B cell (primary cell): ENCODE measurements at regions of chr9 and their contacts with region 1.

Region 1: DNA sequence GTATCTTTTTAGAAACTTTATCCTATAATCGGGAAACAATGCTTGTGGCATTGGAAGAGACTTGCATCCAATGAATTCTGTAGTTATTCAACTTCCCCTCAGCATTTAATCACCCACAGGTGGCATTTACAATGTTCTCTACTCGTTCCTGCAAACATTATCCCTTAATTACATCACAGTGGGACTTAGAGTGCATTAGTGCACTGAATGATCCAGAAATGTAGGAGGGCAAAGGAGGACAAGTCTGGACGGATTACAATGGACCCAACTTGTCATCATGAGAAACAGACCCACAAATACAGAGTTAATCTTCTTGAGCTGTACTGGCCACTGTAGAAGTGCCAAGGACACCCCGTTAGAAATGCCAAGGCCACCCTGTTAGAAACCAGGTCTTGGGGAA is 129.1 kb downstream of the DOCK8 start:
- DNase-seq: no peak
- ATAC-seq: no peak
- H3K4me3 ChIP-seq: no peak overlapping the region
- H3K4me3 Mint-ChIP-seq: no peak overlapping the region
- H3K27ac ChIP-seq: no peak overlapping the region
- H3K27ac Mint-ChIP-seq: no peak overlapping the region
- H3K4me1 ChIP-seq: no peaks in the 10 kb centered on the region
- H3K4me1 Mint-ChIP-seq: no peaks in the 10 kb centered on the region
- H3K27me3 ChIP-seq: no peaks in the 10 kb centered on the region
- H3K27me3 Mint-ChIP-seq: no peaks in the 10 kb centered on the region
- CTCF ChIP-seq: no peak

Region 2: GRCh38 chr9:306887-307286 is 36.9 kb before region 1 on chr9:
- CTCF ChIA-PET with region 1: no interaction called
- POLR2A ChIA-PET with region 1: no interaction called
- intact Hi-C with region 1: no loop called
- DNase-seq: peak; percentile 62
- ATAC-seq: peak; percentile 58
- H3K4me3 ChIP-seq: no peak overlapping the region
- H3K4me3 Mint-ChIP-seq: no peak overlapping the region
- H3K27ac ChIP-seq: peak overlapping the region in 1 of 2 donors; percentile 21
- H3K27ac Mint-ChIP-seq: peak overlapping the region; percentile 59
- H3K4me1 ChIP-seq: no peaks in the 10 kb centered on the region
- H3K4me1 Mint-ChIP-seq: no peaks in the 10 kb centered on the region
- H3K27me3 ChIP-seq: no peaks in the 10 kb centered on the region
- H3K27me3 Mint-ChIP-seq: no peaks in the 10 kb centered on the region
- CTCF ChIP-seq: peak; percentile 34

Region 3: GRCh38 chr9:426264-426663 is 82.5 kb after region 1 on chr9:
- CTCF ChIA-PET with region 1: no interaction called
- POLR2A ChIA-PET with region 1: no interaction called
- intact Hi-C with region 1: loop called (anchors 5 kb)
- DNase-seq: no peak
- ATAC-seq: no peak
- H3K4me3 ChIP-seq: no peak overlapping the region
- H3K4me3 Mint-ChIP-seq: no peak overlapping the region
- H3K27ac ChIP-seq: no peak overlapping the region
- H3K27ac Mint-ChIP-seq: no peak overlapping the region
- H3K4me1 ChIP-seq: no peaks in the 10 kb centered on the region
- H3K4me1 Mint-ChIP-seq: no peaks in the 10 kb centered on the region
- H3K27me3 ChIP-seq: no peaks in the 10 kb centered on the region
- H3K27me3 Mint-ChIP-seq: no peaks in the 10 kb centered on the region
- CTCF ChIP-seq: no peak